Activated CD4-positive, alpha-beta memory T cell treated with anti-CD3 and anti-CD28 coated beads, Interleukin-2, amount 10 ng/mL, durations not matched to agents 7 days and 5 days (primary cell): ENCODE measurements at regions of chr2 and their contacts with region 1.

Region 1: GRCh38 chr2:135709992-135710391 is 31.7 kb upstream of the UBXN4 start:
- DNase-seq: peak; percentile 73
- H3K4me3 Mint-ChIP-seq: no peak overlapping the region
- H3K27ac Mint-ChIP-seq: no peak overlapping the region
- H3K4me1 Mint-ChIP-seq: peaks cover 1% of the 10 kb centered on the region
- H3K27me3 Mint-ChIP-seq: no peaks in the 10 kb centered on the region

Region 2: DNA sequence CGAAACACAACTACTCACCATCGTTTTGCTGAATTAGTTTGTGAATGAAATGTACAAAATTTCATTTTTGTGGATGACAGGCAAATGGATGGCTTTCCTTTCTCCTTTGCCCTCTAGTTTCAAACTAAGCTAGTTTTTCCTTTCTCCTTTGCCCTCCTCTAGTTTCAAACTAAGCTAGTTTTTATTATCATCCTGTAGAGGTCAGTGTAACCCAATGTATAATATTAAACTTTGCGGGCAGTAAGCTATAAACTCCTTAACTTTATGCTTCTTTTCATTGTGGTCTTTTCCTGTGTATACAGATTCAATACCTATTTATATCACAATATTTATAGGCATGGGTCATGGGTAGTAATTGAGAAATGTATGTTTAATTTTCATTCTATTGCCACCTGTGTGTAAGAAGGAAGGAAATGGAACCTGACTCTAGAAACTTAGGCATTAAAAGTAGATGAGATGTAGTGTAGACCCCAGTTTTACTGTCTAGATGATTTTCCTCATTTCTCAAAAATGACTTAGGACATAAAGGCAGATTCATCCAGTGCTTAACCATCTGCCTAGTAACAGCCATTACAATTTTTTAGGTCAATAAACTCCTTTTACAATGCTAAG is 720.9 kb before region 1 on chr2:
- CTCF ChIA-PET with region 1: interaction called, 18 read pairs
- POLR2A ChIA-PET with region 1: no interaction called
- DNase-seq: no peak
- H3K4me3 Mint-ChIP-seq: no peak overlapping the region
- H3K27ac Mint-ChIP-seq: no peak overlapping the region
- H3K4me1 Mint-ChIP-seq: no peaks in the 10 kb centered on the region
- H3K27me3 Mint-ChIP-seq: peaks cover 26% of the 10 kb centered on the region

Region 3: GRCh38 chr2:135004005-135004746 is 705.8 kb before region 1 on chr2:
- CTCF ChIA-PET with region 1: interaction called, 82 read pairs
- POLR2A ChIA-PET with region 1: interaction called, 7 read pairs
- DNase-seq: peak; percentile 73
- H3K4me3 Mint-ChIP-seq: no peak overlapping the region
- H3K27ac Mint-ChIP-seq: no peak overlapping the region
- H3K4me1 Mint-ChIP-seq: peaks cover 3% of the 10 kb centered on the region
- H3K27me3 Mint-ChIP-seq: peaks cover 24% of the 10 kb centered on the region

Region 4: GRCh38 chr2:135010200-135010942 is 699.6 kb before region 1 on chr2:
- CTCF ChIA-PET with region 1: interaction called, 82 read pairs
- POLR2A ChIA-PET with region 1: no interaction called
- DNase-seq: no peak
- H3K4me3 Mint-ChIP-seq: no peak overlapping the region
- H3K27ac Mint-ChIP-seq: no peak overlapping the region
- H3K4me1 Mint-ChIP-seq: peaks cover 14% of the 10 kb centered on the region
- H3K27me3 Mint-ChIP-seq: peaks cover 10% of the 10 kb centered on the region

Region 5: DNA sequence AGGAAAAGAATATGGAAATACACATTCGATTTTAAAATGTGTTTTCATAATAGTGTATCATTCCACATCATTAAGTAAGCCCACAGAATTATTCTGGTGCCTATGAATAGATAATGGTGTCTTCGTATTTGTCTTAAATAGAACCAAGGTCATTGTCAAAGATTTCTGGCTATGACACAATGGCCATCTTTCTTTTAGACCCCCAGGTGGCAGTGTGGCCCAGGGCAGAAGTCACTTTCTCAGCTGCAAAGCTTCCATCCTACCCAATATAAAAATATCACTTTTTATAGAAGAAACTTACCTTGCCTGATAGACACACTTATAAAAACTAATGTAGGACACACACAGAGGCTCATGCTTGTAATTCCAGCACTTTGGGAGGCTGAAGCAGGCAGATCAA is 236.4 kb before region 1 on chr2:
- CTCF ChIA-PET with region 1: interaction called, 41 read pairs
- POLR2A ChIA-PET with region 1: interaction called, 6 read pairs
- DNase-seq: peak; percentile 31
- H3K4me3 Mint-ChIP-seq: no peak overlapping the region
- H3K27ac Mint-ChIP-seq: no peak overlapping the region
- H3K4me1 Mint-ChIP-seq: no peaks in the 10 kb centered on the region
- H3K27me3 Mint-ChIP-seq: no peaks in the 10 kb centered on the region

Region 6: DNA sequence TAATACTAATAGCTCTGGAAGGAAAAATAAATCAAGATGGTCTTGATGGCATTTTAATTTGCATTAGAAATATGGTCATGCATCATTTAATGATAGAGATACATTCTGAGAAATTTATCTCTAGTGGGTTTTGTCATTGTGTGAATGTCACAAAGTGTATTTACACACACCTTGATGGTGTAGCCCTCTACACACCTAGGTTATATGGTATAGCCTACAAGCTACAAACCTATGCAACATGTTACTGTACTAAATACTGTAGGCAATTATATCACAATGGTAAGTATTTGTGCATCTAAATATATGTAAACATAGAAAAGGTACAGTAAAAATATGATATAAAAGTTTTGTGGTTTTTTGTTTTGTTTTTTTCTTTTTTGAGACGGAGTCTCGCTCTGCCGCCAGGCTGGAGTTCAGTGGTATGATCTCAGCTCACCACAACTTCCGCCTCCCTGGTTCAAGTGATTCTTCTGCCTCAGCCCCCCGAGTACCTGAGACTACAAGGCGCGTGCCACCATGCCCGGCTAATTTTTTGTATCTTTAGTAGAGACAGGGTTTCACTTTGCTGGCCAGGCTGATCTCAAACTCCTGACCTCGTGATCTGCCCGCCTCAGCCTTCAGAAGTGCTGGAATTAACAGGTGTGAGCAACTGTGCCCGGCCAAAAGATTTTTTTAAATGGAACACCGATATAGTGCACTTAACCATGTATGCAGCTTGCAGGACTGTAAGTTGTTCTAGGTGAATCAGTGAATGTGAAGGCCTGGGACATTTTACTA is 52.0 kb before region 1 on chr2:
- CTCF ChIA-PET with region 1: interaction called, 12 read pairs
- POLR2A ChIA-PET with region 1: no interaction called
- DNase-seq: peak; percentile 61
- H3K4me3 Mint-ChIP-seq: peak overlapping the region; percentile 51
- H3K27ac Mint-ChIP-seq: peak overlapping the region; percentile 71
- H3K4me1 Mint-ChIP-seq: peaks cover 16% of the 10 kb centered on the region
- H3K27me3 Mint-ChIP-seq: no peaks in the 10 kb centered on the region